ENCODE measurements at regions of chr7 and their contacts with region 1.

Region 1: GRCh38 chr7:4883374-4884144 is at the start of gene RADIL:
- DNase-seq: peak; percentile 94 to 95
- ATAC-seq: peak; percentile 90 to 97 (median 94)
- H3K4me3 ChIP-seq: peak within 1 kb of the TSS; percentile 61 to 77 (median 69)
- H3K27ac ChIP-seq: peak within 1 kb of the TSS; percentile 70 to 90 (median 82)
- H3K4me1 ChIP-seq: peaks cover 3 to 41% (median 14%) of the 10 kb centered on the region in 9 donors
- H3K27me3 ChIP-seq: peaks cover 0 to 27% (median 0%) of the 10 kb centered on the region in 7 donors
- CTCF ChIP-seq: peak; percentile 74 to 98 (median 95)
- total RNA-seq, gene RADIL: 1.2 to 6.6 (median 3.8) TPM

Region 2: DNA sequence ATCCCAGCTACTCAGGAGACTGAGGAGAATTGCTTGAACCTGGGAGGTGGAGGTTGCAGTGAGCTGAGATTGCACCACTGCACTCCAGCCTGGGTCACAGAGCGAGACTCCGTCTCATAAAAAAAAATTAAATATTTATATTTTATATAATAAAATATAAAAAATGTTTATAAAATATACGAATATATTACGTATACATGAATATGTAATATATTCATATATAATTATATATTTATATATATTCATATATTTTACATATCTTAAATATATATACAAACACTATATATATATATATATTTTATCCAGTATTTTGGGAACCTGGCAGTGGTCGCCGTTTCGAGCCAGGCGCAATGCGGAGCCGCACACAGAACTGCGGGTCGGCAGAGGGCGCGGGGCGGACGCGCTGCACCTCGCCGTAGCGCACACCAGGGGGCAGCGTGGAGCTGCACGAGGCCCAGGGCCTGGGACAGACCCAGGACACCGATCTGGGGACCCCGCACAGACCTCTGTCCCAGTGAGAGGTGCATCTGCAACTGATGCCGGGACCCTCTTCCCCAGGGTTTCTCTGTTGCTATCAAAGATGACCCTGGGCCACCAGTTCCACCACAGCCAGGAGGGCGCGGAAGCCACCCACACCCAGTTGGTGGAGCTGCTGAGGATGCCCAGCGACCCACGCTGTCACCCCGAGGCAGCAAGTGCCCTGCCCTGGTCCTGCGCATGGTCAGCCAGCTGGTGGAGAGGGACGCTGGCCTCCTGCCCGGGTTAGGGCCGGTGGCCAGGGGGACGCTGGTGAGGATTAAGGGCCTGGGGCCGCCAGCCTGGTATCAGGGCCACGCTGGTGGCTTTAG is 85.5 kb before region 1 on chr7:
- intact Hi-C with region 1: loop called in 7 of 10 experiments (anchors 1 to 10 kb)
- DNase-seq: peak in 1 of 2 donors; percentile 72
- ATAC-seq: peak; percentile 43 to 76 (median 72)
- H3K4me3 ChIP-seq: no peak overlapping the region
- H3K27ac ChIP-seq: peak overlapping the region in 6 of 10 donors; percentile 25 to 67 (median 48)
- H3K4me1 ChIP-seq: peaks cover 0 to 32% (median 9%) of the 10 kb centered on the region in 9 donors
- H3K27me3 ChIP-seq: no peaks in the 10 kb centered on the region
- CTCF ChIP-seq: peak; percentile 72 to 98 (median 89)

Region 3: DNA sequence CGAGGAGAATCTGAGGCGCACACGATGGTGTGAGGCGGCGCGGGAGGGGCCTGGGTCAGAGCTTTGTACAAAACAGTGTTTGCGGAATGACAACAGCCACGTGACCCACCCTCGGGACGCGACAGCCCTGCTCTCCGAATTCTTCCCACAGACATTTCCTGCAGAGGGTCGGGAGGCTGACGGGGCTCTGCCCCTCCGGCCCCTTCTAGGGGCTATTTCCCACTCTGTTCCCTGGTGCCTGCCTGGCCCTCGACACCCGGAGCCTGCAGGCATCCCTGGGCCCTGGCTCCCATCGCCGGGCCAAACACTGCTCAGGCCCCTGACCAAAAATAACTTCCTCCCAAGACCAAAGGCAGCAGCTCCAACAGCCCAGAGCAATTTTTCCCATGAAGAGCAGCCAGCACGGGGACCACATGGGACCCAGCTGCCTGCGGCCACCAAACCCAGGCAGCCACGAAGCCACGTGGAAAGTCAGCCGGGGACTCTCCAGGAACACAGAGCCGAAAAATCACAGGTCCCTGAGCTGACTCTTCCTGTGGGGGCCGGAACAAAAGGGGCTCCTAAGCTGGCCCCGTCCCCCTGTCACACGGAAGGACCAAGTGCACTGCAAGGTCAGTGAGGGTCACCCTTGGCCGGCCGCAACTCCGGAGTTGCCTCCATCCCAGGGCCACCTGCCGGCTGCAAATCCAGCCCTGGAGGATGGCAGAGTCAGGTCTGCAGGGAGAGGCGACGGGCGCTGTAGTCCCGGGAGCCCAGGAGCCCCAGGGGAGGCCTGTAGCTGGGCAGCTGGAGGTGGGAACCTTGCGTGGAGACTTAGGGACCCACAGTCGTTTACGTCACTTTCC is 63.8 kb before region 1 on chr7:
- intact Hi-C with region 1: no loop called
- DNase-seq: peak; percentile 66 to 70
- ATAC-seq: peak; percentile 32 to 76 (median 72)
- H3K4me3 ChIP-seq: peak overlapping the region in 2 of 10 donors; percentile 6
- H3K27ac ChIP-seq: peak overlapping the region; percentile 6 to 86 (median 71)
- H3K4me1 ChIP-seq: peaks cover 3 to 55% (median 19%) of the 10 kb centered on the region in 9 donors
- H3K27me3 ChIP-seq: no peaks in the 10 kb centered on the region
- CTCF ChIP-seq: no peak

Region 4: DNA sequence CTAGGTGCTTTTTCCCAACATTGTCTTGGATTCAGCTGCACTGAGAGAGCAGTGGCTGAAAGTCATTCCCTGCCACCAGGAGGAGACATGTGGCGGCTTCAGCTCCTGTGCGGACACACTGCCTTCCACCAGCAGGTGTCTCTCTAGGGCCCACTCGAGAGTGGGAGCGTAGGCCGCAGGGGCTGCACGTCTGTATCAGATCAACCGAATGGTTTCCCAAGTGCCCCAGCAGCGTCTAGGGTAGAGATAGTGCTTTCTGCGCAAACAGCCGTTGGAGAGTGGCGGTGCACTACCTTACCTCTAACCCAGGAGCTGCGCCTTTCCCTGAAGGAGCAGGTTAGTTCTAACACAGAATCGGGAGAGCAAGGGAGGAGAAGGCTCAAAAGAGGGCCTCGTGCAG is 53.4 kb before region 1 on chr7:
- intact Hi-C with region 1: loop called in 5 of 10 experiments (anchors 1 to 5 kb)
- DNase-seq: peak; percentile 64 to 72
- ATAC-seq: peak; percentile 62 to 82 (median 76)
- H3K4me3 ChIP-seq: no peak overlapping the region
- H3K27ac ChIP-seq: peak overlapping the region in 1 of 10 donors; percentile 23
- H3K4me1 ChIP-seq: peaks cover 0 to 15% (median 0%) of the 10 kb centered on the region in 9 donors
- H3K27me3 ChIP-seq: no peaks in the 10 kb centered on the region
- CTCF ChIP-seq: peak; percentile 60 to 86 (median 78)

Region 5: DNA sequence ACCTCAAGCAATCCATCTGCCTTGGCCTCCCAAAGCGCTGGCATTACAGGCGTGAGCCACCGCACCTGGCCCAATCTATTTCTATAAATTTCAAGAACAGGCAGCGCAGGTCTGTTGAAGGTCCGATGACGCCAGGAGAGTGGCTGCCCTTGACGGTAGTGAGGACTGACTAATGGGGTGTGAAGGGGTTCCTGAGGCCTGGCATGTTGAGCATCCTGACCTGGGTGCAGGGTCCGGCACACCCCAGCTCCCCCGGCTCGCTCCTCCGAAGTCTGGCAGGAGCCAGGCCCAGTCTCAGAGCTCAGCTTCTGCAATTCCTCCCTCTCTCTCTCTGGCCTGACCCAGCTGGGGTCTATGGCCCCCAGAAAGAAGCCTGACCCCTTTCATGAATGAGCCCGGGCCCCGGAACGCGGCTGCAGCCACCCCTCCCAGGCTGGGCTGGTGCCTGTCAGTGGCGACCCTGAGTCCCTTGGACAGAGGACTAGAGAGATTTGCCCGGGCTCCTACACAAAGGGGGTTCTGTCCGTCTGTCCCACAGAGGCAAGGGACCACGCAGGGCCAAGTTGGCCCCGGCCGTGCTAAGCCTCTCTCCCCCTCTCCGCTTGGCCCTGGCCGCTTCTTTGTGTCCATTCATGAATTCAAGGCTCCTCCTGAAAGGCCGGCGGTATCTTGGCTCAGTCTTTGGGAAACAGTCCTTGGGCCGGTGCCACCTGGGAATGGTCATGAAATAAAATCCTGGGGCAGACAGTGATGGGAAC is 56.6 kb after region 1 on chr7:
- intact Hi-C with region 1: no loop called
- DNase-seq: no peak
- ATAC-seq: peak in 1 of 8 donors; percentile 34
- H3K4me3 ChIP-seq: no peak overlapping the region
- H3K27ac ChIP-seq: no peak overlapping the region
- H3K4me1 ChIP-seq: no peaks in the 10 kb centered on the region
- H3K27me3 ChIP-seq: peaks cover 0 to 15% (median 5%) of the 10 kb centered on the region in 7 donors
- CTCF ChIP-seq: no peak

Measured in heart right ventricle (tissue), 16 donors.